Right ventricle myocardium superior (tissue), 1 donor: ENCODE measurements at regions of chr1 and their contacts with region 1.

Region 1: DNA sequence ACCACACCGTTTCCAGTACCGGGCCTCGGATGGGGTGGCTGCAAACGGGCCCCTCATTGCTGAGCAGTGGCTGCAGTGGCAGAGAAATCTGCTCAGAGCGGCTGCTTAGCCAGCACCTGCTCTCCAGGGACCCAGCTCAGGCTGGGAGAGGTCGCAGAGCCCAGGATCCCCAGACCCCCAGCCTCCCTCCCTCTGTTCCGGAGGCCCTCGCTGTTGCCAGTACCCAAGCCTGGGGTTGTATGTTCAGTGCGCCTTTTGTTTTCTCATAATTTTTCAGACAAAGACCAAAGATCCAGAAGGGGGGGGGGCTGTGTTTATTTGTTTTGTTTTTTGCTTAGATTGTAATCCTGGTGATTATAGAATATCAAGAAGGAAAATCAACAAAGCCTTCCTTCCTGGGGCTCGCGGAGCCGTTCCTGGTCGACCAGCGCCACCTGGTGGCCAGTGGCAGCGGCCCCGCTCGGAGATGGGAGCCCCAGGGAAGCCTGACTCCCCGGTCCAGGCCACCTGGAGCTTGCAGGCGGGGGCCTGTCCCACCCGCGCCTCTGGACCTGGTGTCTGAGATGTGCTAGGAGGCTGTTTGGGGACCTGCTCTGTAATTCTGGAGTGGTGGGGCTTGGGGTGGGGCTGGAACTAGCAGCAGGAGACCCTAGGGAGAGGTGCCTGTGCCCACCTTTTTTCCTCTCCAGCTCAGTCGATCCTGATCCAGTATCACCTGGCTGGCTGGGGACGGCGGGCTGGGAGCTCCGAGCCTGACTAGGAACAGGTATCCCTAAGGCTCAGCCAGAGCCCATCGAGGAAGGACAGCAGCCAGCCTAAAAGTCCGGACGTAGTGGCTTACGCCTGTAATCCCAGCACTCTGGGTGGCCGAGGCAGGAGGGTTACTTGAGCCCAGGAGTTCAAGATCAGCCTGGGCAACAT is 123.9 kb upstream of the VAMP3 start:
- DNase-seq: peak; percentile 82
- ATAC-seq: peak; percentile 46

Region 2: GRCh38 chr1:7224644-7225043 is 422.6 kb before region 1 on chr1:
- intact Hi-C with region 1: loop called (anchors 10 kb)
- DNase-seq: no peak
- ATAC-seq: peak; percentile 49

Region 3: DNA sequence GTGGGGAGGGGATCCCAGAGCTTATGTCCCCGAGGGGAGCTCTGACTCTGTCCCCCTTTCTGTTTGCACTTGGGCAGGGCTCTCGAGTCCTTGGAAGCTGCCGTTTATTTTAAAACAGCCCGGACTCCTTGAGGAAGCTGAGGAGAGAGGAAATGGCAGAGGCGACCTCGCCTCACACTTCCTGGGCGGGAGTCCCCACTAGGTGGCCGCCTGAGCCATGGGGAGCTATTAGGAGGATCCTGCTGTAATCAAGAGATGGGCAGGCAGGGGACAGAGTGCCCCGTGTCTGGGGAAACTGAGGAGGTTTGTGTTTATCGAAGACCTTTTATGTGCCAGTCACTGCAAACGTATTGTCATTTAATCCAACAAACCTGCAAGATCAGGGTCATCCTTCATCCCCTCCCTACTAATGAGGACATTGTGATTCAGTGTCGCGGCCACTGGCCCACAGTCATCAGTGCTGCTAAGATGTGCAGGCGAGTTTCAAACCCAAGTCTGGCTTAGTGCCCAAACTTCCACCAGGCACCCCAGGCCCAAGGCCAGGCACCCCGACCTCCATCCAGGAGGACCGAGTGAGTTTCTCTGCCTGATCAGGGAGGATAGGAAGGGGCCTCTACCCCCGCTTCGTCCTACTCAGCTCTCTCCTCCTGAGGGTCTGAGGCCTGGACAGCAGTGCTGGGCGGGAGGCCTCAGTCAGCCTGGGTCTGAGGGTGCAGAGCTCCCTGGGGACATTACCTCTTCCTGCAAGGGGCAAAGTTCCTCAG is 193.0 kb before region 1 on chr1:
- intact Hi-C with region 1: loop called (anchors 10 kb)
- DNase-seq: no peak
- ATAC-seq: peak; percentile 55

Region 4: GRCh38 chr1:7704214-7705047 is 57.2 kb after region 1 on chr1:
- intact Hi-C with region 1: no loop called
- DNase-seq: peak; percentile 97
- ATAC-seq: peak; percentile 100

Region 5: DNA sequence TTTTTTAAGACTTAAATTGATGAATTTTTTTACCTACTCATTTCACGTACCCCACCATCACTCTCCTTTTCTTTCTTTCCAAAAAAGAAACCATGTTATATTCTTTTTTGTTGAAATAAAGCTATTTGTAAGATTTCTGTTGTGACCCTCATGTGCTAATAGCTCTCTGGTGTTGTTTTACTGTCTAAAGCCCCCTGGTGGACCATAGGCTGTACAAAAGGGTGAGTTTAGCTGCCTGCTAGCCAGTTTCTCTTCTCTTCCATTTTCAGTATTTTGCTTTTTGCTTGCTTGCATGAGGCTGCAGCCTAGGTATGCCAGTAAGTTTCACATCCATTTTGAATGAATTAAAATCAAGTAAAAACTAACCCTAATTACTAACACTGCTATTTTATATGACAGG is 108.2 kb after region 1 on chr1:
- intact Hi-C with region 1: no loop called
- DNase-seq: no peak
- ATAC-seq: no peak

Region 6: DNA sequence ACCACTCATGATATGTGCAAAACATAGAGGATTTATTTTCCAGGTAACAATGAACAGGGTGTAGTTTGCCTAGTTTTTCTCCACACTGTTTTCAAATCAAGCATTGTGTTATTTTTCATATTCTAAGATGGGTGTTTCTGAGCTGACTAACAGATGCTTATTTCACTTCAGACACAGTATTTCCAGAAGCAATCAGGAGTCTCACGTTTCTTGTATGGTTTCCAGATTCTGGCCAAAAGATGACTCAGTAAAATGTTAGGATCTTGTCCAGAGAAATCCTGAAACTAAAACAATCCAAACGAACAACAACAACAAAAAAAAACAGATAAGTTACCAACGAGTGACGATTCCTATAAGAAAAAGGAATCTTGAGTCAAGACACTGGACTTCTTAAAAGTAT is 200.4 kb after region 1 on chr1:
- intact Hi-C with region 1: no loop called
- DNase-seq: no peak
- ATAC-seq: no peak